Caco-2 (cell line): ENCODE measurements at regions of chr18 and their contacts with region 1.

Region 1: GRCh38 chr18:49858309-49859020 is 45.1 kb upstream of the ACAA2 start:
- DNase-seq: peak; percentile 55 to 73
- H3K4me3 ChIP-seq: no peak overlapping the region
- H3K4me3 Mint-ChIP-seq: no peak overlapping the region
- H3K27ac Mint-ChIP-seq: peak overlapping the region; percentile 79
- H3K4me1 ChIP-seq: peaks cover 7% of the 10 kb centered on the region
- H3K4me1 Mint-ChIP-seq: peaks cover 5% of the 10 kb centered on the region
- H3K27me3 ChIP-seq: no peaks in the 10 kb centered on the region
- H3K27me3 Mint-ChIP-seq: no peaks in the 10 kb centered on the region
- CTCF ChIP-seq: peak; percentile 62 to 64

Region 2: DNA sequence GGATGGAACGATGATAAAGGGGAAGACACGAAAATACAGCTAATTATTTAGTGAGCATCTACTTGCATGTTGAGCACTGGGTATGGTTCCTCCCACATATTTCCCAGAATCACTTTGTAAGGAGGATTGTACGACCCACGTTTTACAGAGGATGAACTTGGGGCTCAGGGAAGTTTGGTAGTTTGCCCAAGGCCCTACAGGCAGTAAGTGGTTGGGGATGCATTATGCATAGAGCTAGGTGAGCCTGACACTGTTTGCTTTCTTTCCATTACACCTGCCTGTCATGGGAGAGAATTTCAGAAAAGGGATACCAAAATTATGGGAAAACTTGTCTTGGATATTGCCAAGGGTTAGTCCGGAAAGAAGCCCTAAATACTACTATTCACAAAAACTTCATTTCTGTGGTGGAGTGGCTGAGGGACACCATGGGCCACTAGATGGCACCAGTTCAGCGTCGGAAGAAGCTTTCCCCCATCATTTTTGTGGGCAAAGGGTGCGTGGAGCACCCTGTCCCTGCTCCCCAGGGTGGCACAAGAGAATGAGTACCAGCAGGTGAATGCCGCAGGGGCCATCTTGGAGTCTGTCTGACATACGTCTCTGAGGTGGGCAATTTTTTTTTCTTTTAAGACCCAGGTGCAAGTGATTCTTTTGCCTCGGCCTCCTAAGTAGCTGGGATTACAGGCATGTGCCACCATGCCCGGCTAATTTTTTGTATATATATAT is 347.9 kb before region 1 on chr18:
- CTCF ChIA-PET with region 1: interaction called, 12 read pairs
- POLR2A ChIA-PET with region 1: no interaction called
- intact Hi-C with region 1: loop called (anchors 1 kb)
- DNase-seq: peak in 1 of 2 experiments; percentile 55
- H3K4me3 ChIP-seq: no peak overlapping the region
- H3K4me3 Mint-ChIP-seq: no peak overlapping the region
- H3K27ac Mint-ChIP-seq: no peak overlapping the region
- H3K4me1 ChIP-seq: no peaks in the 10 kb centered on the region
- H3K4me1 Mint-ChIP-seq: no peaks in the 10 kb centered on the region
- H3K27me3 ChIP-seq: no peaks in the 10 kb centered on the region
- H3K27me3 Mint-ChIP-seq: no peaks in the 10 kb centered on the region
- CTCF ChIP-seq: peak; percentile 47 to 70

Region 3: DNA sequence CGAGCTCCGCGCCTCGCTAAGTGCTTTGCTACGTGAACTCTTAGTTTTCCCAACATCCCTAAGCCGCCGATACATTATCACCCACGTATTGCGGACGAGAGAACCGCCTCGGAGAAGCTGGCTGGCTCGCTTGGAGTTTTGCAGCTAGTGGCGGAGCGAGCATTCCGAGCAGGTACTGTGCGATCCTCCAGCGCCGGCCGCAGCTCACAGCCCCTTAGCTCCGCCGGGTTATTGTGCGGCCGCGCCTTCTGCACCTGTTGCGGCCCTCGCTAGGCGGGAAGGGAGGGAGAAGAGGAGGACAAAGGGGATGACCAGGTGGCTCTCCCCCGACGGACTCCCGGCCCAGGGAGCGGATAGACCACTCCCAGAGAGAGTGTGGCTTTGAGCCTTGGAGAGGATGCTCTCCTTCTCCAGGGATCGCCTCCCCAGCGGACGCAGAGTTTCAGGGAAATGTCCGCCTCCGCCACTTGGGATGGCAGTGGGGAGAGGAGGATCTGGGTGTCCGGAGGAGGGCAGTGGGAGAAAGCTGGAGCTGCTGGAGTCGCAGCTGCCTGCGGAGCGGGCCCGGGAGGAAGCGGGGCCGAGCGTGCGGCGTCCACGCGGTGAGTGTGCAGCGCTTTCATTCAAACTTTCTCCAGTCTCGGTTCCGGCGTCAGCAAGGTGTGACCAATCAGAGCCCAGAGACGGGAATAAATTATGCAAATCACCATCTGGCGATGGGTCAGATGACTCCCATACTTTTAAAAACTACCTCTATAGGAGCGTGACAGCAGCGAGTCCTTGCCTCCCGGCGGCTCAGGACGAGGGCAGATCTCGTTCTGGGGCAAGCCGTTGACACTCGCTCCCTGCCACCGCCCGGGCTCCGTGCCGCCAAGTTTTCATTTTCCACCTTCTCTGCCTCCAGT is 296.9 kb before region 1 on chr18 and contains the start of gene LIPG:
- CTCF ChIA-PET with region 1: interaction called, 3 read pairs
- POLR2A ChIA-PET with region 1: no interaction called
- intact Hi-C with region 1: loop called (anchors 2 kb)
- DNase-seq: peak; percentile 82 to 84
- H3K4me3 ChIP-seq: peak within 1 kb of the TSS; percentile 56
- H3K4me3 Mint-ChIP-seq: peak within 1 kb of the TSS; percentile 98
- H3K27ac Mint-ChIP-seq: peak within 1 kb of the TSS; percentile 92
- H3K4me1 ChIP-seq: no peaks in the 10 kb centered on the region
- H3K4me1 Mint-ChIP-seq: no peaks in the 10 kb centered on the region
- H3K27me3 ChIP-seq: no peaks in the 10 kb centered on the region
- H3K27me3 Mint-ChIP-seq: no peaks in the 10 kb centered on the region
- CTCF ChIP-seq: no peak
- total RNA-seq, gene LIPG: 86.7 and 87.5 TPM in 2 replicates

Region 4: GRCh38 chr18:49795612-49796552 is 62.6 kb before region 1 on chr18:
- CTCF ChIA-PET with region 1: interaction called, 4 read pairs
- POLR2A ChIA-PET with region 1: no interaction called
- intact Hi-C with region 1: loop called (anchors 5 kb)
- DNase-seq: no peak
- H3K4me3 ChIP-seq: no peak overlapping the region
- H3K4me3 Mint-ChIP-seq: no peak overlapping the region
- H3K27ac Mint-ChIP-seq: no peak overlapping the region
- H3K4me1 ChIP-seq: no peaks in the 10 kb centered on the region
- H3K4me1 Mint-ChIP-seq: no peaks in the 10 kb centered on the region
- H3K27me3 ChIP-seq: no peaks in the 10 kb centered on the region
- H3K27me3 Mint-ChIP-seq: no peaks in the 10 kb centered on the region
- CTCF ChIP-seq: no peak

Region 5: DNA sequence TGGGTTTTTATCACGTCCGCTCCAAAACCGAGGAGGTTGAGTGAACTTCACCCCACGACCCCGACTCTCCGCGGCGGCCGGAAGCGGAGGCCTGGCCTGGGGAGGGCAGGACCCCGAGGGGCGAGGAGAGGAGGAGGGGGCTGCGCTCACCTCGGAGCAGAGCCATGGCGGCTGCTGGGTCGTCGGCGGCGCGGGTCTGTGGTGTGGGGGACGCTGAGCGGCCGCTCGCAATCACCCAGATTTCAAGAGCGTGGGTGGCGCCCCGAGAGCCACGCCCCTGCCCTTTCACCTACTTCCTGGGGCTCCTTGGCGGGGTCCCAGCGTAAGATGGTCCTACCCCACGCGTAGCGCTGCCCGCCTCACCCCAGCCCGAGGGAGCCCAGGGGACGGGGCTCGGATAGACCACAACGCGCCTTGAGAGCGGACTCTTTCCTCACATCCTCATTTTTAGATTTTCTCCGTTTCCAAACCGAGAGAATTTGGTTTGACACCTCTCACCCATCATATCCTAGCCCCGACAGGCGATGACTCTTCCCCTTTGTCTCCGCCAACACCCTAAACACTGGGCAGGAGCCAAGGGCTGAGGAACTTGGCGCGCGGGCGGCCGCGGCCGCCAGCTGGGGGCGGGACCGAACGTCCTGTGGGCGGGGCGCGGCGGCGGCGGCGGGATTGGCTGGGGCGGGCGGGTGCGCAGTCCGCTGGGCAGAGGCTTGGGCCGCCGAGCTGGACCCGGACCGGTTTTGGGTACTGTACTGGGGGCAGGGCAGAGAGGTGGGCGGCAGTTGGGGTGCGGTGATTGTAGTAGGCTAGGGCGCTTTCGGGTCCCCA is 44.9 kb before region 1 on chr18 and contains the start of gene ACAA2:
- CTCF ChIA-PET with region 1: interaction called, 8 read pairs
- POLR2A ChIA-PET with region 1: interaction called, 3 read pairs
- intact Hi-C with region 1: loop called (anchors 5 kb)
- DNase-seq: peak; percentile 70 to 78
- H3K4me3 ChIP-seq: peak within 1 kb of the TSS; percentile 78
- H3K4me3 Mint-ChIP-seq: peak within 1 kb of the TSS; percentile 85
- H3K27ac Mint-ChIP-seq: peak within 1 kb of the TSS; percentile 89
- H3K4me1 ChIP-seq: peaks cover 20% of the 10 kb centered on the region
- H3K4me1 Mint-ChIP-seq: peaks cover 34% of the 10 kb centered on the region
- H3K27me3 ChIP-seq: no peaks in the 10 kb centered on the region
- H3K27me3 Mint-ChIP-seq: no peaks in the 10 kb centered on the region
- CTCF ChIP-seq: no peak
- total RNA-seq, gene ACAA2: 188 and 207 TPM in 2 replicates

Region 6: GRCh38 chr18:49834258-49834657 is 24.2 kb before region 1 on chr18:
- CTCF ChIA-PET with region 1: no interaction called
- POLR2A ChIA-PET with region 1: no interaction called
- intact Hi-C with region 1: loop called (anchors 1 kb)
- DNase-seq: no peak
- H3K4me3 ChIP-seq: no peak overlapping the region
- H3K4me3 Mint-ChIP-seq: no peak overlapping the region
- H3K27ac Mint-ChIP-seq: peak overlapping the region; percentile 73
- H3K4me1 ChIP-seq: peaks cover 43% of the 10 kb centered on the region
- H3K4me1 Mint-ChIP-seq: no peaks in the 10 kb centered on the region
- H3K27me3 ChIP-seq: no peaks in the 10 kb centered on the region
- H3K27me3 Mint-ChIP-seq: no peaks in the 10 kb centered on the region
- CTCF ChIP-seq: no peak

Region 7: GRCh38 chr18:50038448-50038847 is 180.0 kb after region 1 on chr18:
- CTCF ChIA-PET with region 1: no interaction called
- POLR2A ChIA-PET with region 1: no interaction called
- intact Hi-C with region 1: no loop called
- DNase-seq: no peak
- H3K4me3 ChIP-seq: no peak overlapping the region
- H3K4me3 Mint-ChIP-seq: no peak overlapping the region
- H3K27ac Mint-ChIP-seq: no peak overlapping the region
- H3K4me1 ChIP-seq: no peaks in the 10 kb centered on the region
- H3K4me1 Mint-ChIP-seq: no peaks in the 10 kb centered on the region
- H3K27me3 ChIP-seq: no peaks in the 10 kb centered on the region
- H3K27me3 Mint-ChIP-seq: no peaks in the 10 kb centered on the region
- CTCF ChIP-seq: no peak